K562 (cell line): ENCODE measurements at regions of chr1 and their contacts with region 1.

Region 1: GRCh38 chr1:67430352-67431155 is at the start of gene SERBP1:
- DNase-seq: peak; percentile 85 to 99 (median 90)
- ATAC-seq: peak; percentile 89
- H3K4me3 ChIP-seq: peak within 1 kb of the TSS; percentile 96
- H3K27ac ChIP-seq: peak within 1 kb of the TSS; percentile 98
- H3K4me1 ChIP-seq: peaks cover 14 to 19% of the 10 kb centered on the region in 2 experiments; a peak in 4 of 5 replicates
- H3K27me3 ChIP-seq: no peaks in the 10 kb centered on the region
- CTCF ChIP-seq: no peak; a peak in 1 of 6 replicates
- EP300 ChIP-seq: peak; percentile 5; the same call in 1 of the 2 replicates
- POLR2A ChIP-seq: peak; percentile 93
- RAD21 ChIP-seq: no peak
- polyA plus RNA-seq, gene SERBP1: 79.9 to 81.2 TPM

Region 2: DNA sequence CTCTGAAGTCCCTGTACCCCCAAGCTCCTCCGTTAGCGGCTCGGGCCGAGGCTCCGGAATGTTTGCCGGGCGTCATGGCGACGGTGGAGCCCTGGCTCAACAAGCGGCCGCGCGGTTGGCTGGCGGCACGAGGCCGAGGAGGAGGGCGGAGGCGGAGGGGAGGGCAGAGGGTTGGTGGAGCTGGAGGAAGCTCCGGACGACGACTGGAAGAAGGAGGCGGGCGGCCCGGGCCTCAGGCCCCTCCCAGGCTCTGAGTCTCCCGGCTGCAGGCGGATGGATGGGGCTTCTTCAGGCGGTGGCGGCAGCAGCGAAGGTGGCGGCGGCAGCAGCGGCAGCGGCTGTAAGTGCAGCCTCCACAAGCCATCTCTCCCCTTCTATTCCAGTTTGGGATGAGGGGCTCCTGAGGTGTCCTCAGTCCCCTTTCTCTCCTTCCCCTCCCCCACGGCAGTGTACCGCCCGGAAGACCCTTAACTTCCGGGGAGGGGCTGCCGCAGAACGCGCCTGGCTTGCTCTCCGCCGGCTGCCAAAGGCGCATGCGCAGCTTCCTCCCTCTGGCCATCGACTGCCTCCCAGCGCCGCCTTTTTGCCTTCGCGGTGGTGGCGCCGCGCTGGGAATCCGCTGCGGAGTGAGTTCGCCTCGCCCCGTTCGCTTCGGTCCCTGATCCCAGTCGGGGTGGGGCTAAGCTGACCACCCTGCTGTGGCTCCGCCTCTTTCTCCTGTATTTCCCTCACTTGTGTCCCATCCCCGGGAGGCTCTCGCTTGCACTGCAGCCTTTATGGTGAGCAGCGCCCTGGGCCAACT is 505.6 kb before region 1 on chr1 and contains the starts of genes DNAI4 and MIER1:
- CTCF ChIA-PET with region 1: no interaction called
- POLR2A ChIA-PET with region 1: no interaction called
- in situ Hi-C with region 1: no loop called
- intact Hi-C with region 1: loop called (anchors 5 kb)
- DNase-seq: peak; percentile 98 to 99 (median 99)
- ATAC-seq: peak; percentile 85
- H3K4me3 ChIP-seq: peak within 1 kb of the TSS; percentile 85
- H3K27ac ChIP-seq: peak within 1 kb of the TSS; percentile 81
- H3K4me1 ChIP-seq: peaks cover 0 to 16% of the 10 kb centered on the region in 2 experiments; a peak in 3 of 5 replicates
- H3K27me3 ChIP-seq: no peaks in the 10 kb centered on the region
- CTCF ChIP-seq: peak; percentile 6 to 37 (median 10); a peak in 3 of 6 replicates
- EP300 ChIP-seq: no peak; the same call in 1 of the 2 replicates
- POLR2A ChIP-seq: peak; percentile 88
- RAD21 ChIP-seq: peak in 1 of 2 experiments; percentile 9; a peak in 1 of 4 replicates
- polyA plus RNA-seq, gene DNAI4: 1.8 to 2.2 TPM
- polyA plus RNA-seq, gene MIER1: 21.5 to 23.7 TPM

Region 3: DNA sequence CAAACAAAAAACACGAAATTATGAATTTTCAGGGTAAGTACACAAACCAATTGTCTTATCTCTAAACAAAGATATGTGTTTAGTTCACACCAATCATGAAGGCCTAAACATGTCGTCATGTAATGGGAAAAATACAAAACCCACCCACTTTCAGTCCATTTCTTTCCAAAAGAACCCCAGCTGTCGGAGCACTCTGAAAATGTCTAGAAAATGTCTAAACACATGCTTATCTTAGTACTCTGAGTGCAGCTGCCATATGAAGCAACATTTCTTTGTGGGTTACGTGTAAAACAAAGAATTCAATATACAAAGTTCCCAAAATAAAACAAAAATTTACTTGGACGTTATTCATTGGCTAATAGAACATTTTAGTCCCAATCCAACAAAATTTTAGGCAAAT is 23.1 kb before region 1 on chr1:
- CTCF ChIA-PET with region 1: no interaction called
- POLR2A ChIA-PET with region 1: interaction called, 11 read pairs
- in situ Hi-C with region 1: no loop called
- intact Hi-C with region 1: no loop called
- DNase-seq: no peak
- ATAC-seq: no peak
- H3K4me3 ChIP-seq: no peak overlapping the region
- H3K27ac ChIP-seq: no peak overlapping the region
- H3K4me1 ChIP-seq: no peaks in the 10 kb centered on the region
- H3K27me3 ChIP-seq: no peaks in the 10 kb centered on the region
- CTCF ChIP-seq: no peak
- EP300 ChIP-seq: no peak
- POLR2A ChIP-seq: no peak
- RAD21 ChIP-seq: no peak

Region 4: DNA sequence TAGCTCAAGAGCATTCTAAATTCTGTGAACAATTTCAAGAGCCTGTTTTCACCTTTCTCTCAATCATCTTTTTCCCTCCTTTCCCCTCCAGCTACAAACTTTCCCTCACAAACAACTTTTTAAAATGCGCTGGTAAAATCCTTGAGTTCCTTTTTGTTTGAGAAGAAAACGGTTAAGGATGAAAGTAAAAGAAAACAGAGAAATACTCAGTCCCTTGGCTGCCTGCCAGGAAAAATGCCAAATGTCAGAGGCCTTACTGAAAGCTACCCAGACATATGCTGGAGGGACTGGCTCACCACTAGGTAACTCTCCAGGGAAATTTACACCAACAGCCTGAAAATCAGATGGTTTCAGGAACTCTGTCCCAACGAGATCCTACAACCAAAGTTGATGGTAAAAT is 10.6 kb after region 1 on chr1:
- CTCF ChIA-PET with region 1: no interaction called
- POLR2A ChIA-PET with region 1: interaction called, 16 read pairs
- in situ Hi-C with region 1: no loop called
- intact Hi-C with region 1: no loop called
- DNase-seq: peak in 1 of 4 experiments; percentile 54
- ATAC-seq: peak; percentile 43; the same call in 1 of the 3 replicates
- H3K4me3 ChIP-seq: no peak overlapping the region
- H3K27ac ChIP-seq: no peak overlapping the region
- H3K4me1 ChIP-seq: peaks cover 0 to 15% of the 10 kb centered on the region in 2 experiments; a peak in 3 of 5 replicates
- H3K27me3 ChIP-seq: no peaks in the 10 kb centered on the region
- CTCF ChIP-seq: no peak
- EP300 ChIP-seq: no peak
- POLR2A ChIP-seq: no peak
- RAD21 ChIP-seq: no peak

Region 5: GRCh38 chr1:67489643-67490042 is 59.1 kb after region 1 on chr1:
- CTCF ChIA-PET with region 1: no interaction called
- POLR2A ChIA-PET with region 1: interaction called, 3 read pairs
- in situ Hi-C with region 1: no loop called
- intact Hi-C with region 1: loop called (anchors 2 kb)
- DNase-seq: peak in 3 of 4 experiments; percentile 19 to 61 (median 60)
- ATAC-seq: peak; percentile 92
- H3K4me3 ChIP-seq: no peak overlapping the region
- H3K27ac ChIP-seq: no peak overlapping the region
- H3K4me1 ChIP-seq: peaks cover 0 to 5% of the 10 kb centered on the region in 2 experiments; a peak in 3 of 5 replicates
- H3K27me3 ChIP-seq: no peaks in the 10 kb centered on the region
- CTCF ChIP-seq: peak; percentile 41 to 76 (median 49); a peak in 5 of 6 replicates
- EP300 ChIP-seq: no peak
- POLR2A ChIP-seq: no peak
- RAD21 ChIP-seq: peak; percentile 55 to 89

Region 6: DNA sequence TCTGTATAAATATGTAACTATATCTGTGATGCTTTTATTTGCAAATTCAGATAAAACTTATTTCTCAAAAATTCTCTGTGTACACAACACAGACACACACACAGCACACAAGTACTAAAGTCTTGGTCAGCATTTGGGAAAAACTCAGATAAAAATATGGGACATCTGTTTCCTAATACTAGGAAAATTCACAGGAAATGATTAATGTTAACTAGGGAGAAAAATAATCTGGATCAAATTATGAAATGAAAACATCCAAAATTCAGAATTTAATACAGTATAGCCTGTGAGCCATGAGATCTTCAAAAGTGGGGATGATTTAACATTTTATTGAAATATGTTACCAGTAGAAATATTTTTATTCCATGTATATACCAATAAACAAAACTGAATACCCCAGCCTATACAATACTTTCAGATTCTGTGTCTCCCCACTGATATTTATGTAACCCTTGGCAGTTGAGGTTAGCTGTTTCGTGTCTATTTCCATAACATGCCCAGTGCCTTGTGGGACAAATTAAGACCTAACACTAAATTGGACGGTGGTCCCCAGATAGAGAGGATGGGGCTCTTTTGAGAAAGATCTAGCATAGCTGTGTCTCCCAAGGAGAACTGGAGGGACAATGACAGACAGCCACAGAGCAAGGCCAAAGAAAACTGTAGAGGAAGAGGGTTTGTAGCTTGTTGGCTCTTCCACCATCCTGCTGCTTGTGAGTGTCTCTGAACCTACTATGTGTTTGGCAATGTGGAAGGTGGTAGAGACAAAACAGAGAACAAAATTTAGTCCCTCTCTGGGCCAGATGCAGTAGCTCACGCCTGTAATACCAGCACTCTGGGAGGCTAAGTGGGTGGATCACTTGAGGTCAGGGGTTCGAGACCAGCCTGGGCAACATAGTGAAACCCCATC is 355.5 kb after region 1 on chr1:
- CTCF ChIA-PET with region 1: no interaction called
- POLR2A ChIA-PET with region 1: no interaction called
- in situ Hi-C with region 1: no loop called
- intact Hi-C with region 1: no loop called
- DNase-seq: no peak
- ATAC-seq: no peak
- H3K4me3 ChIP-seq: no peak overlapping the region
- H3K27ac ChIP-seq: no peak overlapping the region
- H3K4me1 ChIP-seq: no peaks in the 10 kb centered on the region
- H3K27me3 ChIP-seq: peaks cover 8 to 21% of the 10 kb centered on the region in 2 experiments; a peak in 4 of 5 replicates
- CTCF ChIP-seq: no peak
- EP300 ChIP-seq: no peak
- POLR2A ChIP-seq: no peak
- RAD21 ChIP-seq: no peak